GM12878 (cell line): ENCODE measurements at regions of chr11 and their contacts with region 1.

Region 1: DNA sequence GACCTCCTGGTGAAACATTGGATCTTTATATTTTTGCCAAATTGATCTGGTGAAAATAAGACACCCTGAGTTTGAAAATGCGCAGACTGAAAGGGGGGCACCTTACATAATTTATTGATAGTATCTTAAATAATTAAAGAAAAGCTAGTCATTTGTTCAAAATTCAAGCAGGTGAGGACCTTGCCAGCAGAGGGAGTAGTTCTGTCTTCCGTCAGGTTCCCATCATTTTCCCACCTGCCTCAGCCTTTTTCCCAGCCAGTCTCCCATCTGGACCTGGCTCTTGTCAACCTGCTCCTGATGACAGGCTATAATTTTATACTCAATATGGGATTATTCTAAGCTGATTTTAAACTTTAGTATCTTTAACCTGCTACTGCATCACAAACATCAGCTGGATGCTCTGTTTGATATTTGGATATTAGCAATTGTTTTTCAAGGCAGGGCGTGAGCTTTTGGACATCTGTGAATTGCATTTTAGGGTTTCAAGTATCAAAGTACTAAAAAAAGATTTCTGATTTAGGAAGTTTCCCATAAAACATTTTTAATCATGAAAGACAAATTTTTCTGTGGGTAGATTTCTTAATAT is 132.0 kb downstream of the ELP4 start:
- DNase-seq: no peak
- ATAC-seq: no peak
- H3K4me3 ChIP-seq: no peak overlapping the region
- H3K27ac ChIP-seq: no peak overlapping the region
- H3K4me1 ChIP-seq: no peaks in the 10 kb centered on the region
- H3K27me3 ChIP-seq: no peaks in the 10 kb centered on the region
- CTCF ChIP-seq: peak; percentile 54 to 61 (median 56)
- EP300 ChIP-seq: no peak
- POLR2A ChIP-seq: no peak
- RAD21 ChIP-seq: peak; percentile 32

Region 2: DNA sequence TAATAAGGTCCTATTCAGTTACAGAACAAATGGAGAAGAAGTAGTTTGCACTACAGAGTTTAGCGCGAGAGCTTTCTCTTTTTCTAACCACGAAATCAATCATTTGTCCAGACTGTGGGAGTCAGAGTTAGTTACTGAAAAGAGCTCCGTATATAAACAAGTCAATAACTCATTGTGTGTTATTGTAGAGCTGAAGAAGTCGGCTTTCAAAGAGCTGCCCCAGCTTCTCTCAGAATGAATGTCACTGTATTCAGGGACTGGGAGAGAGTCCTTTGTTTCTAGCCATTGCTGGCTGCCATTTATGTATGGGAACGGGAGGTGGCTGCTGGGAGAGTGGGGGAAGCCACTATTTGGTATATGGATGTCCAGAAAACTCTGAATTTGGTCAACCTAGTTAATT is 499.8 kb before region 1 on chr11:
- CTCF ChIA-PET with region 1: no interaction called
- POLR2A ChIA-PET with region 1: no interaction called
- RAD21 ChIA-PET with region 1: no interaction called
- SMC1A ChIA-PET with region 1: no interaction called
- in situ Hi-C with region 1: no loop called
- intact Hi-C with region 1: no loop called
- DNase-seq: no peak
- ATAC-seq: no peak
- H3K4me3 ChIP-seq: no peak overlapping the region
- H3K27ac ChIP-seq: no peak overlapping the region
- H3K4me1 ChIP-seq: no peaks in the 10 kb centered on the region
- H3K27me3 ChIP-seq: no peaks in the 10 kb centered on the region
- CTCF ChIP-seq: no peak
- EP300 ChIP-seq: no peak
- POLR2A ChIP-seq: no peak
- RAD21 ChIP-seq: no peak

Region 3: DNA sequence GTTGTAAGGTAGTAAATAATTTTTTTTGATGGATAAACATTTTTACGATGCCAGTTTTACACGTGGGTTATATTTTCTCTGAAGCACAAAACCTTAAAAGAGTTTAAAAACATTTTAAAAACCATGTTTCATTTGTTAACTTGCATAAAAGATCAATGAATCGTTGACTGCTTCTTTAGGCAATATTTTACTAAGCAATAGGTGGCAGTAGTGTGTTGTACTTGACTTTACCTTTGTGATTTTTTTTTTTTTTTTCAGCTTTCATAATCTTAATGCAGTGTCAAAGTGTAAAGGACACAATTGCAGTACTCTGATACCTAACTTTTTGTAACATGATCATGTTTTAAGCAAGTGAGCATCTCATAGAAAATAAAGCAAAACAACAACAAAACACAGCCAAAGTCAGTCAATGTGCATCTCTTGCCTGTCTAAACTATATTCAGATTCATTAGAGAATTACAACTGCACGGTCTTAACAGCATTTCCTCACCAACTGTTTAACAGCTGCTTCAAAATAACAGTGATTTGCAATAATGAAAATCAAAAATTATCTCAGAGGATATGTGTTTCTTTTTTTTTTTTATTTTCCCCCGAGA is 244.2 kb before region 1 on chr11:
- CTCF ChIA-PET with region 1: interaction called, 11 read pairs
- POLR2A ChIA-PET with region 1: no interaction called
- RAD21 ChIA-PET with region 1: no interaction called
- SMC1A ChIA-PET with region 1: no interaction called
- in situ Hi-C with region 1: no loop called
- intact Hi-C with region 1: no loop called
- DNase-seq: no peak
- ATAC-seq: peak; percentile 70
- H3K4me3 ChIP-seq: no peak overlapping the region
- H3K27ac ChIP-seq: no peak overlapping the region
- H3K4me1 ChIP-seq: no peaks in the 10 kb centered on the region
- H3K27me3 ChIP-seq: no peaks in the 10 kb centered on the region
- CTCF ChIP-seq: peak; percentile 43 to 72 (median 55); a peak in 5 of 6 replicates
- EP300 ChIP-seq: no peak
- POLR2A ChIP-seq: no peak
- RAD21 ChIP-seq: peak; percentile 78

Region 4: GRCh38 chr11:31582697-31583096 is 58.9 kb before region 1 on chr11:
- CTCF ChIA-PET with region 1: no interaction called
- POLR2A ChIA-PET with region 1: no interaction called
- RAD21 ChIA-PET with region 1: no interaction called
- SMC1A ChIA-PET with region 1: no interaction called
- in situ Hi-C with region 1: no loop called
- intact Hi-C with region 1: no loop called
- DNase-seq: no peak
- ATAC-seq: no peak
- H3K4me3 ChIP-seq: no peak overlapping the region
- H3K27ac ChIP-seq: no peak overlapping the region
- H3K4me1 ChIP-seq: no peaks in the 10 kb centered on the region
- H3K27me3 ChIP-seq: no peaks in the 10 kb centered on the region
- CTCF ChIP-seq: no peak
- EP300 ChIP-seq: no peak
- POLR2A ChIP-seq: no peak
- RAD21 ChIP-seq: no peak

Region 5: DNA sequence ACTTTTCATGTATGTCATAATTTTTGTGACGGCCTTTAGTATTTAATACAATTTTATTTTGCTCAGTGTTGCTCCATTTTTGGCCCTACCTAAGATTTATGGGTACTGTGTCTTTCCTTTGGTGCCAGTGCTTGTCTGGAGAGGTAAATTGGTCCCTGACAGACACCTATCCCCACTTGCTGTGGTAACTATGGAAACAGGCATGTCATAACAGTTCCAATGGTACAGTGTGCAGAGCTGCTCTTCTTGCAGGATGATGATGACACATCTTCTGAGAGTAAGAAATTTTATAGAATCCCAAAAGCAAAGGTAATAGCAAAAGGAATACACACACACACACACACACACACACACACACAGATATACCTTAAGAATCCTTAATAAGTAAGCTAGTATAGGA is 13.5 kb before region 1 on chr11:
- CTCF ChIA-PET with region 1: interaction called, 34 read pairs
- POLR2A ChIA-PET with region 1: no interaction called
- RAD21 ChIA-PET with region 1: interaction called, 4 read pairs
- SMC1A ChIA-PET with region 1: interaction called, 13 read pairs
- in situ Hi-C with region 1: no loop called
- intact Hi-C with region 1: no loop called
- DNase-seq: no peak
- ATAC-seq: no peak
- H3K4me3 ChIP-seq: no peak overlapping the region
- H3K27ac ChIP-seq: no peak overlapping the region
- H3K4me1 ChIP-seq: no peaks in the 10 kb centered on the region
- H3K27me3 ChIP-seq: no peaks in the 10 kb centered on the region
- CTCF ChIP-seq: no peak
- EP300 ChIP-seq: no peak
- POLR2A ChIP-seq: no peak
- RAD21 ChIP-seq: no peak

Region 6: GRCh38 chr11:31680770-31681169 is 39.2 kb after region 1 on chr11:
- CTCF ChIA-PET with region 1: interaction called, 11 read pairs
- POLR2A ChIA-PET with region 1: no interaction called
- RAD21 ChIA-PET with region 1: no interaction called
- SMC1A ChIA-PET with region 1: interaction called, 3 read pairs
- in situ Hi-C with region 1: no loop called
- intact Hi-C with region 1: no loop called
- DNase-seq: no peak
- ATAC-seq: no peak
- H3K4me3 ChIP-seq: no peak overlapping the region
- H3K27ac ChIP-seq: no peak overlapping the region
- H3K4me1 ChIP-seq: no peaks in the 10 kb centered on the region
- H3K27me3 ChIP-seq: no peaks in the 10 kb centered on the region
- CTCF ChIP-seq: no peak
- EP300 ChIP-seq: no peak
- POLR2A ChIP-seq: no peak
- RAD21 ChIP-seq: no peak

Region 7: GRCh38 chr11:31810779-31811647 is 169.4 kb after region 1 on chr11 and contains the start of gene PAX6:
- CTCF ChIA-PET with region 1: interaction called, 5 read pairs
- POLR2A ChIA-PET with region 1: no interaction called
- RAD21 ChIA-PET with region 1: no interaction called
- SMC1A ChIA-PET with region 1: no interaction called
- in situ Hi-C with region 1: no loop called
- intact Hi-C with region 1: loop called (anchors 10 kb)
- DNase-seq: peak; percentile 5
- ATAC-seq: peak; percentile 59
- H3K4me3 ChIP-seq: peak within 1 kb of the TSS; percentile 63
- H3K27ac ChIP-seq: no peak within 1 kb of the TSS
- H3K4me1 ChIP-seq: peaks cover 12% of the 10 kb centered on the region; the same call in 1 of the 2 replicates
- H3K27me3 ChIP-seq: peaks cover 30 to 63% of the 10 kb centered on the region in 2 experiments
- CTCF ChIP-seq: no peak
- EP300 ChIP-seq: no peak
- POLR2A ChIP-seq: 0 out of 2 replicates have a peak, but pooled peaks have one; percentile 29
- RAD21 ChIP-seq: no peak
- polyA plus RNA-seq, gene PAX6: 0.10 TPM in 1 of 2 experiments, not detected in the other

Region 8: GRCh38 chr11:32006799-32007388 is 365.3 kb after region 1 on chr11:
- CTCF ChIA-PET with region 1: interaction called, 8 read pairs
- POLR2A ChIA-PET with region 1: no interaction called
- RAD21 ChIA-PET with region 1: interaction called, 9 read pairs
- SMC1A ChIA-PET with region 1: interaction called, 5 read pairs
- in situ Hi-C with region 1: no loop called
- intact Hi-C with region 1: loop called (anchors 5 kb)
- DNase-seq: peak; percentile 11
- ATAC-seq: peak; percentile 87
- H3K4me3 ChIP-seq: no peak overlapping the region
- H3K27ac ChIP-seq: no peak overlapping the region
- H3K4me1 ChIP-seq: no peaks in the 10 kb centered on the region
- H3K27me3 ChIP-seq: no peaks in the 10 kb centered on the region
- CTCF ChIP-seq: peak; percentile 68 to 75 (median 72); a peak in 5 of 6 replicates
- EP300 ChIP-seq: no peak
- POLR2A ChIP-seq: no peak
- RAD21 ChIP-seq: peak; percentile 68